ENCODE measurements at regions of chr14 and their contacts with region 1.

Region 1: DNA sequence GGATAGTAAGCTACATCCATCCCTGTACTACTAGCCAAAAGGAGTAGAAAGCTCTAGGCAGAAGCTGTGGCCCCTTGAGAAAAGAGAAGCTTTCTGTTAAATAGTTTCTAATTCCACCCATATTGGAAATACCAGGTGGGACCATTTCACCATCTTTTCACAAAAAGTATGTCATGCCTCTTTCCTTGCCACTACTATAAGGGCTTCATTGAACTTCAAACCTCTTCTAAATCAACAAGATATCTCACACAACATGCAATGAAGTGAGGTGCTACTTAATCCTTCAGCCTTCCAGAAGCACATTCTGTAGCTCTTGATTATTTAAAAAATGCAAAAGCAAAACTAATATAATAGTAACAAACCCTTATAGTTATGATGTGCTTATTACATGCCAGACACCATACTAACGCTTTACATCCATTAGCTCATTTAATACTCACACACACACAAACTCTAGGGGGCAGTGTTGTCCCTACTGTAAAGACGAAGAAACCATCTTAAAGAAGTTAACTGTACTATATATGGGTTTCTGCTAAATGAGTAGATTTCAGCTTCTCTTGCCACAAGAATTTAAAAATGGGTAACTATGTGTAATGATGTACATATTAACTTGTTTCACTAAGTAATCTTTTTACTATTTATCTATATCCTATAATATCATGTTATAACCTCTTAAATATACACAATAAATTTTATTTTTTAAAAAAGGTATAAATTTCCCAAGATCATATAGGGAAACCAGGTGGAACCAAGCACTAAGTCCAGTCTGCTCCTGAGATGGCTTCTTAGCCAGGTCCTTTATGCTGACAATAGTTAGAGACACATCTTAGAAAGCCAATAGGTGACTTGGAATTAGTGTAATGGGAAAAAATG is 124.4 kb downstream of the RPS29 start:
- DNase-seq: peak; percentile 88
- H3K4me3 Mint-ChIP-seq: no peak overlapping the region
- H3K27ac Mint-ChIP-seq: no peak overlapping the region
- H3K4me1 Mint-ChIP-seq: no peaks in the 10 kb centered on the region
- H3K27me3 Mint-ChIP-seq: peaks cover 16% of the 10 kb centered on the region

Region 2: DNA sequence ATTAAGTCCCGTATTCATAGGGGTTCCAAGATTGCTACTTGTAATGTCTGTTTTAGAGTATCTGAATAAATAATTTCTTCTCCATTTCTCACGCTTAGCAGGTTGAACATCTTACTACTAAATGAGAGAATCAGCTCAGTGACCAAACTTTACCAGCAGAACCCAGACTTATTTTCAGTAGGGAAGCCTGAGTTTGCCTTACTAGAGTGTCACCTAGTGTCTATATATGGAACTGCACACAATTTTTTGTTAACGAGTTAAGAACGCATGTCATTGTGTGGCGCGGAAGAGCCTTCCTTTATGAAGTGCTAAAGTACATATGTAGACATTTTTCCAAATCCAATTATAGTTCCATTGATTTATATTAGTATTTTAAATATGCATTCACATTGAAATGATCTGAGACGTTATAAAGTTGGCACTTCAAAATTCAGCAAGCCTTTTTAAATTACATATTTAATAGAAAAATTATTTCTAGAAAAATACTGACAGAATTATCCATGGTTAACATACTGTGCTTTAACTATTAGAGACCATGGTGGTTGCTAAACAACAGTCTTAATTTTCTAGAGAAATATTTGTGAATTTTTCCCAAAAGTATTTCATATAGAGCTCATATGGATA is 36.1 kb after region 1 on chr14:
- intact Hi-C with region 1: loop called (anchors 1 kb)
- DNase-seq: peak; percentile 73
- H3K4me3 Mint-ChIP-seq: no peak overlapping the region
- H3K27ac Mint-ChIP-seq: no peak overlapping the region
- H3K4me1 Mint-ChIP-seq: no peaks in the 10 kb centered on the region
- H3K27me3 Mint-ChIP-seq: peaks cover 19% of the 10 kb centered on the region

Measured in activated CD4-positive, alpha-beta T cell treated with anti-CD3 and anti-CD28 coated beads, Interleukin-2, amount 10 ng/mL, durations not matched to agents 24 days and 14 days (primary cell).